ENCODE measurements at regions of chr11 and their contacts with region 1.

Region 1: DNA sequence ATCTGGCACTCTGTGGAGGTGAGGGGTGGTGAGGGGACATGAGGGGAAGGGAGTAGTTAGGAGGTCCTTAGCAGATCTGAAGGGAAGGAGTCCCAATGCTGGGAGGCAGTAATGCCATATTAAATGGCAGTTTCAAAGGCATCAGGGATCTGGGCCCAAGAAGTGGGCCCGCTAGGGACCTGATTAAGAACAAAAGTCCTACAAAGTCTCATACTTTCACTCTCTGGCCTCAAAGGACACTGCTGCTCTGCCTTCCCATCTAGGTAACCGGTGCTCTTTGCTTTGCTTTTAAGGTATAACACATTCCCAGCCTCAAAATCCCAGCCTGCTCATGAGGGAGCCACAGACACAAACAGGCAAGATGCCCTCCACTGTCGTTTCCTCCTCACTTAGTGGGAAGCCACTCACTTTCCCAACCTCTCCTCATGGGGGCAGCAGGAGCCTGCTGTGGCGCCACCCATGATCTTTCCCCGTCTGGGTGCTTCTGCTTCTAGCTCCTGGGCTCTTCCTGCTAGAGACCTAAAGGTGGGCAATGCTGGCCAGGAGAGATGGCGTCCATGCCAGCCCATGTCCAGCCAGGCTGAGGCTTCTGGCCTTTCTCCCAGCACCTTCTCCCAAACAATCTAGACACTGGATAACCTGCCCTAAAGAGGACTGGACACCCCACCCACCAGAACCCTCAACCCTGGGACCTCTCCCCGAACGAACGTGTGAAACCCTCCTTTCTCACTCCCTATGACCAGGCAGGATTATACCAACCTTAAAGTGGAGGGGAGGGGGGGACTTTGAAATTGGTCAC is 68.3 kb downstream of the PLEKHA7 start:
- DNase-seq: peak; percentile 68
- ATAC-seq: peak; percentile 99
- H3K4me3 ChIP-seq: no peak overlapping the region
- H3K27ac ChIP-seq: no peak overlapping the region
- H3K4me1 ChIP-seq: peaks cover 10% of the 10 kb centered on the region
- H3K27me3 ChIP-seq: no peaks in the 10 kb centered on the region
- CTCF ChIP-seq: peak; percentile 94
- EP300 ChIP-seq: no peak
- POLR2A ChIP-seq: no peak
- RAD21 ChIP-seq: peak; percentile 94

Region 2: DNA sequence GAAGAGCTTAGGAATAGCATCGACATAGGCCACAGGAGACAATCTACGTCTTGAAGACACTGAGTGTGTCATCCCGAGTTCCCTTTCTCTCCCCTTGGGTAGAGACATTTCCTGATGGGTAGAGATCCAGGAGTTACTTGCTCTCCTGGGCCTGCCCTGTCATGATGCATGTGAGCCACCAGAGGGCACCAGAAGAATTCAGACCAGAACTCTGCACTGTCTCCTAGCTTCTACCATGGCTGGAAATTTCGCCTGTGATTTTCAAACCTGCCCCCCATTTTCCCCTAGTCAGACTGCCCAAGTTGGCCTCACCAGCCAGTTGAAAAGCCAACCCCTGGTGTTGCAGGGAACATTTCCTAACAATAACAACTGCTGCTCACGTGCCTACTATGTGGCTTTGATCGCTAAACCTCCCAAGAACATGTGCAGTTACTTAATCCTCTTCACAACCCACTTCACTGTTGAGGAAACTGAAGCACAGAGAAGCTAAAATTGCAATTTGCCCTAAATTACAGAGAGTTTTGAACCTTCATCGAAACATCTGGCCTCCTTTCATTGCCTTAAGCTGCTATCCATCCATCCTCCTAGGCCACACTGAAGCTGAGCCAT is 160.2 kb before region 1 on chr11:
- CTCF ChIA-PET with region 1: no interaction called
- POLR2A ChIA-PET with region 1: no interaction called
- in situ Hi-C with region 1: no loop called
- intact Hi-C with region 1: no loop called
- DNase-seq: peak; percentile 63
- ATAC-seq: peak; percentile 77
- H3K4me3 ChIP-seq: no peak overlapping the region
- H3K27ac ChIP-seq: peak overlapping the region; percentile 45
- H3K4me1 ChIP-seq: peaks cover 53% of the 10 kb centered on the region
- H3K27me3 ChIP-seq: no peaks in the 10 kb centered on the region
- CTCF ChIP-seq: peak; percentile 86
- EP300 ChIP-seq: no peak
- POLR2A ChIP-seq: no peak
- RAD21 ChIP-seq: peak; percentile 64; the same call in 1 of the 2 replicates

Region 3: DNA sequence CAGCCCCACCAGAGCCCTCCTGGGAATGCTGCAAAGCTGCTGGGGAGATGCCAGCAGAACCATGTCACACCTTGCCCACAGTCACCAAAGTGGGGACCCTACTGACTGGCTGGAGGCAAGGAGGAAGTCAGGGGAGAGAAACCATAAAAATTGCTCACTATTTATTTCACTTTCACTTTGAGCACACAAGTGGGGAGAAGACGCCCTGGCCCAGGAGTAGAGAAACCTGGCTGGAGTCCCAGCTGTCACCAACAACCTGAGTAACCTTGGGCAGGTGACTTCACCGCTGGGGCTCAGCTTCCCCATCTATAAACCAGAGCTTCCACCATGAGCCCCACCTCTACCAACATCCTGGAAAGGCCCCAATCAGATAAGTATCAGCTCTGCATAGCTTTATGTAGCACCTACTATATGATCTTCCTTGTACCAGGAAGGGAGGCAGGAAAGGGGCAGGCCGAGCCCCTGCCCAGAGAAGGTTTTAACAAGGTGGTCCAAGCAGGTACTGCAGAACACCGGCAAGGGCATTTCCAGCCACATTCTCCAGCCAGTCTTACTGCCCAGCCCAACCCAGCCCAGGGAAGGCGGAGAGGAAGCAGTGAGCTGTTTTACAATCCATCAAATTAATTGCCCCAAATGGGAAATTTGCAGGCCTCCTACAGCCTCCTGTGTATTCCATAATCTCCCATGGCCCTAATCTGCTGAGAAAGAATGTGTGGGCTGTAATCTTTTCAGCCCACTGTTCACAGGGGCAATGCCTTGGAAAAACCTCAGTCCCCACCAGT is 40.8 kb after region 1 on chr11:
- CTCF ChIA-PET with region 1: no interaction called
- POLR2A ChIA-PET with region 1: no interaction called
- in situ Hi-C with region 1: no loop called
- intact Hi-C with region 1: loop called (anchors 1 kb)
- DNase-seq: no peak
- ATAC-seq: no peak
- H3K4me3 ChIP-seq: no peak overlapping the region
- H3K27ac ChIP-seq: peak overlapping the region; percentile 4
- H3K4me1 ChIP-seq: peaks cover 64% of the 10 kb centered on the region
- H3K27me3 ChIP-seq: no peaks in the 10 kb centered on the region
- CTCF ChIP-seq: no peak
- EP300 ChIP-seq: no peak
- POLR2A ChIP-seq: no peak
- RAD21 ChIP-seq: no peak

Region 4: GRCh38 chr11:17036666-17037542 is 91.0 kb after region 1 on chr11:
- CTCF ChIA-PET with region 1: interaction called, 6 read pairs
- POLR2A ChIA-PET with region 1: no interaction called
- in situ Hi-C with region 1: no loop called
- intact Hi-C with region 1: loop called (anchors 1 kb)
- DNase-seq: peak; percentile 66
- ATAC-seq: peak; percentile 94
- H3K4me3 ChIP-seq: no peak overlapping the region
- H3K27ac ChIP-seq: no peak overlapping the region
- H3K4me1 ChIP-seq: peaks cover 15% of the 10 kb centered on the region
- H3K27me3 ChIP-seq: no peaks in the 10 kb centered on the region
- CTCF ChIP-seq: peak; percentile 74
- EP300 ChIP-seq: no peak
- POLR2A ChIP-seq: no peak
- RAD21 ChIP-seq: peak; percentile 68